K562 (cell line): ENCODE measurements at regions of chr11 and their contacts with region 1.

Region 1: GRCh38 chr11:46741600-46742484 is 22.8 kb downstream of the F2 start:
- DNase-seq: no peak
- ATAC-seq: no peak; the same call in 2 of the 3 replicates
- H3K4me3 ChIP-seq: no peak overlapping the region
- H3K27ac ChIP-seq: no peak overlapping the region
- H3K4me1 ChIP-seq: no peaks in the 10 kb centered on the region; a peak in 1 of 5 replicates
- H3K27me3 ChIP-seq: no peaks in the 10 kb centered on the region
- CTCF ChIP-seq: no peak
- EP300 ChIP-seq: no peak
- POLR2A ChIP-seq: no peak; the same call in 1 of the 2 replicates
- RAD21 ChIP-seq: no peak

Region 2: GRCh38 chr11:47130543-47130942 is 388.7 kb after region 1 on chr11:
- CTCF ChIA-PET with region 1: no interaction called
- POLR2A ChIA-PET with region 1: no interaction called
- in situ Hi-C with region 1: loop called (anchors 10 kb)
- intact Hi-C with region 1: no loop called
- DNase-seq: peak in 1 of 4 experiments; percentile 29
- ATAC-seq: peak; percentile 67
- H3K4me3 ChIP-seq: no peak overlapping the region
- H3K27ac ChIP-seq: no peak overlapping the region
- H3K4me1 ChIP-seq: peaks cover 0 to 6% of the 10 kb centered on the region in 2 experiments; a peak in 2 of 5 replicates
- H3K27me3 ChIP-seq: no peaks in the 10 kb centered on the region; a peak in 1 of 5 replicates
- CTCF ChIP-seq: no peak
- EP300 ChIP-seq: 0 out of 2 replicates have a peak, but pooled peaks have one; percentile 22
- POLR2A ChIP-seq: no peak
- RAD21 ChIP-seq: no peak